Naive thymus-derived CD8-positive, alpha-beta T cell (primary cell): ENCODE measurements at regions of chr5 and their contacts with region 1.

Region 1: GRCh38 chr5:35822511-35822910 is 34.2 kb upstream of the IL7R start:
- DNase-seq: peak; percentile 12 to 86 (median 68)
- ATAC-seq: peak; percentile 82 to 87
- H3K4me3 Mint-ChIP-seq: peak overlapping the region; percentile 54 to 79 (median 70)
- H3K27ac Mint-ChIP-seq: peak overlapping the region in 9 of 10 donors; percentile 82 to 97 (median 96)
- H3K4me1 Mint-ChIP-seq: peaks cover 55 to 90% (median 88%) of the 10 kb centered on the region in 4 donors
- H3K27me3 Mint-ChIP-seq: no peaks in the 10 kb centered on the region

Region 2: DNA sequence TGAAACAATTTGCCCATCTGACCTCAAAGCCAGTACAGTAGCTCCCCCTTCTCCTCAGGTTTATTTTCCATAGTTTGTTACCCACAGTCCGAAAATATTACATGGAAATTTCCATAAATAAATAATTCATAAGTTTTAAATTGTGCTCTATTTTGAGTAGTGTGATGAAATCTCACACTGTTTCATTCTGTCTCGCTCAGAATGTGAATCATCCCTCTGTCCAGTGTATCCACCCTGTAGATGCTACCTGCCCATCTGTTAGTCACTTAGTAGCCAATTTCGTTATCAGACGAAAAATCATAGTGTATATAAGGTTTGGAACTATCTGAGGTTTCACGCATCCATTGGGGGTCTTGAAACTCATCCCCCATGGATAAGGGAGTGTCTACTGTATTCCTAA is 66.5 kb before region 1 on chr5:
- POLR2A ChIA-PET with region 1: no interaction called
- DNase-seq: no peak
- ATAC-seq: no peak
- H3K4me3 Mint-ChIP-seq: no peak overlapping the region
- H3K27ac Mint-ChIP-seq: peak overlapping the region in 3 of 10 donors; percentile 11 to 50 (median 15)
- H3K4me1 Mint-ChIP-seq: peaks cover 11 to 28% (median 20%) of the 10 kb centered on the region in 4 donors
- H3K27me3 Mint-ChIP-seq: no peaks in the 10 kb centered on the region

Region 3: GRCh38 chr5:35777358-35778087 is 45.0 kb before region 1 on chr5:
- POLR2A ChIA-PET with region 1: interaction called, 99 read pairs
- DNase-seq: peak; percentile 53 to 83 (median 68)
- ATAC-seq: peak; percentile 54 to 60
- H3K4me3 Mint-ChIP-seq: peak overlapping the region; percentile 20 to 84 (median 72)
- H3K27ac Mint-ChIP-seq: peak overlapping the region; percentile 75 to 97 (median 92)
- H3K4me1 Mint-ChIP-seq: peaks cover 34 to 70% (median 61%) of the 10 kb centered on the region in 4 donors
- H3K27me3 Mint-ChIP-seq: no peaks in the 10 kb centered on the region

Region 4: DNA sequence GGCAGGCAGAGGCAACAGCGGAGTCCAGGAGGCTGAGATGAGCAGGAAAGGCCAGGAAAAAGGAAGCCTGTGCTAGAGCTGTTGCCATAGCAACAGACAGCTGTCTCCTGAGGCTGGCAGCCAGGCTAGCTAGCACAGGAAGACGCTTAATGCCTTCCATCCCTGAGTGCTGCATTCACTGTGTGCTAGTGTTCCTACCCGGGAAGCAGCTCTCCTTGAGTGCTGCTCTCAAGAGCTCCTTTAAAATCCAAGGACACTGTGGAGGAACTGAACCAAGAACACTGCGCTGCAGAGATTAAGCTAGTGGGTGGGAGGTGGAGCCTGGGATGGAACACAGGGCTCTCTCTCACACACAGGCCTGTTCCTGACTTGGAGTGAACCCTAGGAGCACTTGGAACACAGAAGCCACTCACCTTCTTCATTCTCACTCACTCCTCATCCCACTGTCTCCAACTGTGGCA is 19.3 kb before region 1 on chr5:
- POLR2A ChIA-PET with region 1: interaction called, 82 read pairs
- DNase-seq: peak in 4 of 10 donors; percentile 24 to 63 (median 38)
- ATAC-seq: peak; percentile 64 to 66
- H3K4me3 Mint-ChIP-seq: peak overlapping the region in 8 of 10 donors; percentile 12 to 77 (median 50)
- H3K27ac Mint-ChIP-seq: peak overlapping the region; percentile 73 to 94 (median 84)
- H3K4me1 Mint-ChIP-seq: peaks cover 38 to 66% (median 63%) of the 10 kb centered on the region in 4 donors
- H3K27me3 Mint-ChIP-seq: no peaks in the 10 kb centered on the region

Region 5: DNA sequence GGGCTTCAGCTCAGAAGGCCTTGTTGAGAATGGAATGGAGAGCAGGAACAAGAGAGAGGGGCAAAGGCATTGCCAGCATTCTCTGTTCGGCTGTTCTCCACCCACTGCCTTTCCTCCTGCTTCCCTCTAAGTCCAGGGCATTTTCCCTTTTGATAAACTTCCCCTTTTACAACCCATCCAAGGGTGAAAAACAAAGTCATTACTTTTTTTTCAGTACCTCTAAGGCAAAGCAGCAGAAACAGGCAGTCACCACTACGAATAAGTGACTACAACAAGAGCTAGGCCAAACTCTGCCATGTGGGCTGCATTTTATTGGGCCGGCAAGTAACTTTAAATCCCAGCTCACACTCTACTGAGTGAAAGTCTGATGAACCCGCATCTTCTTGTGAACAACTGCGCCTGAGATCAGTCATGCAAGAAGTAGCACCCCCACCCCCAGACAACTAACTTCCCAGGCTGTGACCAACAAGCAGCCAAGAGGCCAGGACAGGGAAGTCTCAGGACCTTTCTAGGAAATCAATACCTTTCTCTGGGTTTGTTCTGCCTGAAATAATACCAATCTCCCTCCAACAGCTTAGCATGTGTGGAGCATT is 47.3 kb after region 1 on chr5:
- POLR2A ChIA-PET with region 1: interaction called, 29 read pairs
- DNase-seq: no peak
- ATAC-seq: peak in 1 of 2 donors; percentile 10
- H3K4me3 Mint-ChIP-seq: peak overlapping the region in 8 of 10 donors; percentile 33 to 78 (median 65)
- H3K27ac Mint-ChIP-seq: peak overlapping the region; percentile 77 to 92 (median 88)
- H3K4me1 Mint-ChIP-seq: peaks cover 41 to 91% (median 83%) of the 10 kb centered on the region in 4 donors
- H3K27me3 Mint-ChIP-seq: no peaks in the 10 kb centered on the region

Region 6: DNA sequence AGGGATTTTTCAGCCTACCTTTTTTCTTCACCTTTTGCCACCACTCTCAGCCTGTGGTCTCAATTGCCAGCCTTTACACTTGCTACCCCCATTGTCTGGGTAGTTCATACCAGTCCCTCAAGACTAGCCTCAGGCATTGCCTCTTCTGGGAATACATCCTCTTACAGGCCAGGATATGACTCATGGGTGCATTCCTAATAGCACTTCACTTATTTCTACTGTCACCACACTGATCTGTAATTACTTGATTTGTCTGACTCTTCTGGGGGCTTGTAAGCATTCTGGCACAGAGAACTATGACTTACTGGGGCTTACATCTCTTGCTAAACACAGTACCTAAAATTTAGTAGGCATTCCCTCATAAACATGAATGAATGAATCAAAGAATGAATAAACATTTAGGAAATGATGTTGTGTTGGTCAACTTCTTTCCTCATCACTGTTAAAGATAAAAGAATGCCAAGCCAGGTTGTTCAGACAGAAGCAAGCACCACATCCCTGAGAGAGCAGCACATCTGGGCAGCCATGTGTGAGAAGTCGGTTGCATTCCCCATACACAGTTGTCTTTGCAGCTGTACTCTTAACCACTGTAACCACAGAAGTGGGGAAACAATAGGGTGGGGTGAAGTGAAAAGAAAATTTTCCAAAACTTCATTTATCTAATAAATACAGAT is 61.7 kb after region 1 on chr5:
- POLR2A ChIA-PET with region 1: interaction called, 31 read pairs
- DNase-seq: no peak
- ATAC-seq: peak; percentile 43 to 54
- H3K4me3 Mint-ChIP-seq: peak overlapping the region in 7 of 10 donors; percentile 5 to 51 (median 21)
- H3K27ac Mint-ChIP-seq: peak overlapping the region; percentile 9 to 85 (median 58)
- H3K4me1 Mint-ChIP-seq: peaks cover 30 to 55% (median 53%) of the 10 kb centered on the region in 4 donors
- H3K27me3 Mint-ChIP-seq: no peaks in the 10 kb centered on the region

Region 7: DNA sequence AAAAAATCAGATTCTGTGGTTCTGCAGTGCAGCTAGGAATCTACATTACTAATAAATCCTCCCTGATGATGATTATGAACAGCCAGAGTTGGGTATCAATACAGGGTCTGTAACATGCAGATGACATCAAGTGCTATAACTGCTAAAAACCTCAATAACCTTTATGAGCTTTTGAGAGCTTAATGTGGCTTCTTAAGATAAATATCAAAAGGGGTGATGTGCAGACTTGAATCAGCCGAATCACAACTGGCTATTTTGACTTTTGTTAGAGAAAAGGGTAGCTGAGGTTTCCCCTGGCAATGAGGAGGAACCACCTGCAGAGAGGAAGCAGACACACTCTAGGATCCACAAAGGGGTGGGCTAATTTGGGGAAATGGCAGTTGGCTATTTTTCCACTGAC is 85.7 kb after region 1 on chr5:
- POLR2A ChIA-PET with region 1: no interaction called
- DNase-seq: no peak
- ATAC-seq: peak; percentile 41 to 53
- H3K4me3 Mint-ChIP-seq: no peak overlapping the region
- H3K27ac Mint-ChIP-seq: peak overlapping the region in 1 of 10 donors; percentile 78
- H3K4me1 Mint-ChIP-seq: peaks cover 13 to 35% (median 29%) of the 10 kb centered on the region in 4 donors
- H3K27me3 Mint-ChIP-seq: no peaks in the 10 kb centered on the region

Region 8: DNA sequence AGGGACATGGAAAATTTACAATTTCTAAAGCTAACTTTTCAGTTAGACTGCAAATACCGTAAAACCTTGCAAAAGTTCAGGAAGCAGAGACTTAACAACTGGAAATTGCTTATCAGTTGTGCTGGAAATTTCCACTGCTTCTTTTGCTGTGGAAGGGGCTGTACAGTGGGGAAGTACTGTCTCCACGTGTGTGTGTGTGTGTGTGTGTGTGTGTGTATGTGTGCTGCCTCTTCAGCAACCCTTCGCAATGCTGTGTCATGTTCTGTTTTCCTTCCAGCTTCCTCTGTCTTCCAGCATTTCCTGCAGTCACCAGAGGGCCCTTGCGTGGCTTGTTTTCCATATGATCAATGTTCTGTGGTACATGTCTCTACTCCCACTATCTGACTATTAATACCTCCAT is 566.7 kb after region 1 on chr5:
- POLR2A ChIA-PET with region 1: no interaction called
- DNase-seq: no peak
- ATAC-seq: no peak
- H3K4me3 Mint-ChIP-seq: no peak overlapping the region
- H3K27ac Mint-ChIP-seq: no peak overlapping the region
- H3K4me1 Mint-ChIP-seq: peaks cover 0 to 6% (median 3%) of the 10 kb centered on the region in 4 donors
- H3K27me3 Mint-ChIP-seq: peaks cover 5 to 46% (median 19%) of the 10 kb centered on the region in 5 donors